Activated CD4-positive, alpha-beta memory T cell treated with anti-CD3 and anti-CD28 coated beads for 36 hours (primary cell): ENCODE measurements at regions of chr14 and their contacts with region 1.

Region 1: DNA sequence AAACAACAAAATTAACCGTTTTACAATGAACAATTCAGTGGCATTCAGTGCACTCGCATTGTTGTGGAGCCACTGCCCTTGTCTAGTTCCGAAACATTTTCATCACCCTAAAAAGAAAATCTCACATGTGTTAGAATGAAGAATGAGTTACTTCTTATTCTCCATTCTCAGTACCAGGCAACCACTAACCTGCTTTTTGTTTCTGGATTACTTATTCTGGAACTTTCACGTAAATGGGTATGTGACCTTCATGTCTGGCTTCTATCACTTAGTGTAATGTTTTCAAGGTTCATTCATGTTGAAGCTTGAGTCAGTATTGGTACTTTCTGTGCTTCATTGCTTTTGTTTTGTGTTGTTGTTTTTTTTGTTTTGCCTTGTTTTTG is 15.6 kb downstream of the RCOR1 start:
- DNase-seq: no peak
- H3K4me3 Mint-ChIP-seq: no peak overlapping the region
- H3K27ac Mint-ChIP-seq: peak overlapping the region; percentile 23
- H3K4me1 Mint-ChIP-seq: peaks cover 47% of the 10 kb centered on the region
- H3K27me3 Mint-ChIP-seq: no peaks in the 10 kb centered on the region

Region 2: GRCh38 chr14:102633906-102634595 is 26.0 kb after region 1 on chr14:
- CTCF ChIA-PET with region 1: no interaction called
- POLR2A ChIA-PET with region 1: no interaction called
- intact Hi-C with region 1: loop called (anchors 1 kb)
- DNase-seq: peak; percentile 56
- H3K4me3 Mint-ChIP-seq: no peak overlapping the region
- H3K27ac Mint-ChIP-seq: no peak overlapping the region
- H3K4me1 Mint-ChIP-seq: peaks cover 11% of the 10 kb centered on the region
- H3K27me3 Mint-ChIP-seq: no peaks in the 10 kb centered on the region